ENCODE measurements at regions of chr17 and their contacts with region 1.

Region 1: DNA sequence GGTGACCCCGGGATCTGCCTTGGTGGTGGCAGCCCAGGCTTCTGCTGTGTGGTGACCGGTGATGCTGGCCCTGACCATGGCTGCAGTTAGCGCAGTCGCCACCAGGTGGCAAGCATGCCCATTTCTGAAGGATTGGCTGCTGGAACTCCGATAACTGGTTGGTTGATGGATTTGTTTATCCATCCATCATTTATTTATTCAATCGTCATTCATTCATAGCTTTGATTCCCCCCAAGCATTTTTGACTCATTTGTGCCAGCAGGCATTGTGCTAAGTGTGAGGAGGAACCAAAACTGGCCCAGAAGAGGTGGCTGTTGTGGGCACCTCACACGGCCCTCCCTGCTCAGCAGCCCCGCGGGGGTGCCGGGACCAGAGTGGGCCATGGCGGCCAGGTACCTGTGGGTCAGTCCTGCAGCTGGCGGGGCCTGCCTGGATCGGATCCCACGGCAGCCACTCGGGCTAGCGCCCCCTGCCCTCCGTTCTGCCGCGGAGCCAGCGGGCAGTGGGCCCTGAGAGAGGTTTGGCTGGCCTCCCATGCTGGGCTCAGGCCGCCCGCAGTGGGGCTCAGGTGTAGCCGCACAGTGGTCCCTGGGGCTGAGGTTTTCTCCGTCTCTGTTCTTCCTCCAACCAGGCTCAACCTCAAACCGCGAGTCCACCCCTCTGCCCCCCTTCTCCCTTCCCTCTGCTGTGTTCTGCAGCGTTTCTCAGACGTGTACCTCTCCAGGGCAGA is 28.8 kb upstream of the ITGA3 start:
- DNase-seq: peak; percentile 69 to 92 (median 86)
- H3K4me3 ChIP-seq: peak overlapping the region in 57 of 59 donors; percentile 9 to 58 (median 41)
- H3K27ac ChIP-seq: no peak overlapping the region
- H3K27me3 ChIP-seq: peaks cover 0 to 11% (median 0%) of the 10 kb centered on the region in 45 donors
- CTCF ChIP-seq: peak; percentile 83 to 100 (median 96)

Region 2: DNA sequence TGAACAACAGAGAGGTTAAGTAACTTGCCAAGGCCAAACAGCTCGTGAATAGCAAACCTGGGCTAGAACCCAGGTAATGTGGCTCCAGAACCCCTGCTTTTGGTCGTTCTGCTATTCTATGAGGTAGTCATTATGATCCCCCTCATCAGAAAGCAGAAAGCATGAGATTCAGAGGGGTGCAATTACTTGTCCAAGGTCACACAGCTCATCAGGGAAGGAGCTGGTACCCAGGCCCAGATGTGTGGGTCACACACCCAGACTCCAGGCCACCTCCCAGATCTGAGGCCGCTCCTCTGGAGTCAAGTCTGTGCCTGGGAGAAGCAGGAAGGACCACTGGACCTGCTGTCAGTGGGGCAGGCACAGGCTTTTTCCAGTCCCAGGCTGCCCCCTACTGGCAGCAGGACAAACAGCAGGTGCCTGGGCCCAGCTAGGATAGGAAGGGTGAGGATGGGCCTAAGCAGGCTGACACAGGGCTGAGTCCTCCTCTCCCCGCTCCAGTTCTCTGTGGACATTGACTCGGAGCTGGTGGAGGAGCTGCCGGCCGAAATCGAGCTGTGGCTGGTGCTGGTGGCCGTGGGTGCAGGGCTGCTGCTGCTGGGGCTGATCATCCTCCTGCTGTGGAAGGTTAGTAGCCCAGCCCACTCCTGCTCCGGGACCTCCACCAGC is 60.3 kb after region 1 on chr17:
- intact Hi-C with region 1: loop called (anchors 2 kb)
- DNase-seq: peak in 5 of 10 donors; percentile 40 to 73 (median 56)
- H3K4me3 ChIP-seq: no peak overlapping the region
- H3K27ac ChIP-seq: no peak overlapping the region
- H3K27me3 ChIP-seq: no peaks in the 10 kb centered on the region
- CTCF ChIP-seq: peak; percentile 58 to 92 (median 85)

Region 3: GRCh38 chr17:50161023-50161910 is 134.2 kb after region 1 on chr17:
- intact Hi-C with region 1: loop called in 1 of 2 experiments (anchors 10 kb)
- DNase-seq: peak; percentile 83 to 96 (median 91)
- H3K4me3 ChIP-seq: peak overlapping the region; percentile 51 to 84 (median 68)
- H3K27ac ChIP-seq: peak overlapping the region in 56 of 59 donors; percentile 19 to 88 (median 73)
- H3K27me3 ChIP-seq: no peaks in the 10 kb centered on the region
- CTCF ChIP-seq: peak; percentile 88 to 99 (median 97)

Region 4: DNA sequence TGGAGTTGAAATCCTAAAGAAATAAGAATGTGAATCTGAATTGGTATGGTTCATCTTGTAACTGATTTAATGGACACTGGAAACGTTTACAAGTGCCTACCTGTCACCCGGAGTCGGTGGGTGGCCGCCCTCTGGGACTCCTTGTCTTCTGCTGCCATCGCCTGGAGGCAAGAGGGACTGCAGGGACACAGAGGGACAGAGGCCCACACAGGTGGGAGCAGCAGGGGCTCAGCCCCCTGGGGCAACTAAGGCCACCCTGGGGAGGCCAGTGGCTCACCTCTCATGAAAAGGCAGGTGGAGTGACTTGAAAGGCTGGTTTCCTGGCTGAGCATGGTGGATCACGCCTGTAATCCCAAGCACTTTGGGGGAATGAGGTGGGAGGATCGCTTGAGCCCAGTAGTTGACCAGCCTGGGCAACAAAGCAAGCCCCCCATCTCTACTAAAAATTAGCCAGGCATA is 270.4 kb after region 1 on chr17:
- intact Hi-C with region 1: loop called in 1 of 2 experiments (anchors 5 kb)
- DNase-seq: peak; percentile 57 to 84 (median 72)
- H3K4me3 ChIP-seq: no peak overlapping the region
- H3K27ac ChIP-seq: no peak overlapping the region
- H3K27me3 ChIP-seq: no peaks in the 10 kb centered on the region
- CTCF ChIP-seq: peak; percentile 44 to 97 (median 89)

Measured in dorsolateral prefrontal cortex (tissue), 120 donors.